Sigmoid colon (tissue), 7 donors: ENCODE measurements at regions of chr10 and their contacts with region 1.

Region 1: DNA sequence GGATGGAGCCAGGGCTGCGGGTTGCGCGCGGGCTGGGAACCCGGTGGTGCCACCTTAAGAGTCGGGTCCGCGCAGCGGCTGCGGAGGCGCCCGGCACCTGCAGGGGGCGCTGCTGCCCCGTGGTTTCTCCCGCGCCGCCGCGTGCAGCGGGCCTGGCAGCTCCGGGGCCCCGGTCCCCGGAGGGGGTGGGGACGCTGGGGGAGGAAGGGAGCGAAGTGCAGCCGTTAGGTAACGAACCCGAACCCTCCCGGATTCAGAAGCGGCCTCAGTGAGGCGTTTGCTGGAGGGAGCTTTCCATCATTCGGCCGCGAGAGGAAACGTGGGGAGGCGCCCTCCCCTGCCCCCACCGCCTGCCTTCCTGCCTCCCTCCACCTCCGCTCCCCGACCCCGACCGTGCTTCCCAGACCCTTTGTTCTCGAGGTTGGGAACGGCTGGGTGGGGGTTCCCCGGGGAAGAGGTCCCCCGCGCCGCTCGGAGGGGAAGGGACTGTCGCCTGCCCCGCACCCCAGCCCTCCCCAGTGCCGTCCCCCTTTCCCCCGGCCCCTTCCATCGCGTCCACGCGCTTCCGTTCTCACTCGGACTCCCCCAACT is 29.6 kb downstream of the SKIDA1 start:
- DNase-seq: peak; percentile 86
- H3K4me3 ChIP-seq: peak overlapping the region; percentile 50 to 83 (median 66)
- H3K27ac ChIP-seq: peak overlapping the region; percentile 73 to 81 (median 74)
- H3K4me1 ChIP-seq: peaks cover 0 to 45% (median 20%) of the 10 kb centered on the region in 4 donors
- H3K27me3 ChIP-seq: no peaks in the 10 kb centered on the region
- CTCF ChIP-seq: peak; percentile 52 to 96 (median 88)
- EP300 ChIP-seq: no peak
- POLR2A ChIP-seq: no peak

Region 2: DNA sequence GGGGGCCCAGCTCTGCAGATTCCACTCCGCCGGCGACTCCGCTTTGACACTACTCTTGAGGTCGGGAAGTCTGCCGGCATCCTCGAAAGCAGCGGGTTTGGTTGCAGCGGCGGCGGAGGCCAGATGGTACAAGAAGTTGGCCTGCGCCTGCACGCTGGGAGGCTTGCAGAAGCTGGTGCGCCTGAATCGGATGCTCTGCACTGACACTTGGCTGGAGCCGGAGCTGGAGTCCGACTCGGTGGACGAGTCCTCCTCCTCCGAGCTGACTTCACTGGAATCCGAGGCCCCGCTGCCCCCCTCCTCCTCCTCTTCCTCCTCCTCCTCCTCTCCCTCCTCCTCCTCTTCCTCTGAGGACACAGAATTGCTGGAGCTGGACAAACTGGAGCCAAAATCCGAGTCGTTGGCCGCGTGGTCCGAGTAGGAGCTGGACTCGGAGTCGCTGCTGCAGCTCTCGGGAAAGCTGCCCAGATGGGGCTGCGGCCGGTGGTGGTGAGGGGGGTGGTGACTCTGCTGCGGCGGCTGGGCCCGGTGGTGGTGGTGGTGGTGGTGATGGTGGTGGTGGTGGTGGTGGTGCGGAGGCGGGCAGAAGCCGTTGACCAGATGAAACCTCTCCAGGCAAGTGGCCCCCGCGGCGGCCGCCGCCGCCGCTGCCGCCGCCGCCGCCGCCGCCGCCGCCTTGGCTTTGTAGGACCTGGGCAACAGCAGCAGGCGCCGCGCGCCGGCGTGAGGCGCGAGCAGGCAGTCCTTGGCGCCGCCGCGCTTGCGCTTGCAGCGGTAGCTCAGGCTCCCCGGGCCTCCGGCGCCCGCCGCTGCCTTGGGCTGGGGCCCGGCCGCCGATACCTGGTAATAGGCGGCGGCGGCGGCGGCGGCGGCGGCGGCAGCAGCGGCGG is 20.6 kb after region 1 on chr10:
- intact Hi-C with region 1: loop called (anchors 2 kb)
- DNase-seq: peak; percentile 83
- H3K4me3 ChIP-seq: peak overlapping the region; percentile 45 to 68 (median 64)
- H3K27ac ChIP-seq: peak overlapping the region; percentile 86 to 99 (median 92)
- H3K4me1 ChIP-seq: peaks cover 0 to 73% (median 35%) of the 10 kb centered on the region in 4 donors
- H3K27me3 ChIP-seq: peaks cover 0 to 6% (median 0%) of the 10 kb centered on the region in 3 donors
- CTCF ChIP-seq: no peak
- EP300 ChIP-seq: no peak
- POLR2A ChIP-seq: no peak

Region 3: DNA sequence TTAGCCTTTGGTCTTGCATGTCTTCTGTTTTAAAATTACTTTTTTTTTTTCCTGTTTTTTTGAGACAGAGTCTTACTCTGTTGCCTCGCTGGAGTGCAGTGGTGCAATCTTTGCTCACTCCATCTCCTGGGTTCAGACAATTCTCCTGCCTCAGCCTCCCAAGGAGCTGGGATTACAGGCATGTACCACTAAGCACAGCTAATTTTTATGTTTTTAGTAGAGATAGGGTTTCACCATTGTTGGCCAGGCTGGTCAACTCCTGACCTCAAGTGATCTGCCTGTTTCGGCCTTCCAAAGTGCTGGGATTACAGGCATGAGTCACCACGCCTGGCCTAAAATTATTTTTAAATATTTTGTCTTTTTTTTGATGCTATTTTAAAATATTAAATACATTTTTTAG is 76.7 kb after region 1 on chr10:
- intact Hi-C with region 1: no loop called
- DNase-seq: peak; percentile 66
- H3K4me3 ChIP-seq: no peak overlapping the region
- H3K27ac ChIP-seq: no peak overlapping the region
- H3K4me1 ChIP-seq: peaks cover 0 to 23% (median 18%) of the 10 kb centered on the region in 4 donors
- H3K27me3 ChIP-seq: no peaks in the 10 kb centered on the region
- CTCF ChIP-seq: no peak
- EP300 ChIP-seq: no peak
- POLR2A ChIP-seq: no peak

Region 4: DNA sequence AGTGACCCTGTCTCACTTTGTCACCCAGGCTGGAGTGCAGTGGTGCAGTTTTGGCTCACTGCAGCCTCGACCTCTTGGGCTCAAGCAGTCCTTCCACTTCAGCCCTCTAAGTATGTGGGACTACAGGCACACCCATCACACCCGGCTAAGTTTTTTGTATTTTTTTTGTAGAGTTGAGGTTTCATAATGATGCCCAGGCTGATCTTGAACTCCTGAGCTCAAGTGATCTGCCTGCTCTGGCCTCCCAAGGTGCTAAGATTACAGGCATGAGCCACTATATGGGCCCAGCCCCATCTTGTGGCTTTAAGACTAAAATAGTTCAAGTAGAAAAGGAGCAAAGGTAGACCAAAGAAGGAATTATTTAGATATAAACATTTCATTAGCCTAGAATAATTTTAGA is 103.7 kb after region 1 on chr10:
- intact Hi-C with region 1: loop called (anchors 10 kb)
- DNase-seq: no peak
- H3K4me3 ChIP-seq: no peak overlapping the region
- H3K27ac ChIP-seq: no peak overlapping the region
- H3K4me1 ChIP-seq: peaks cover 0 to 26% (median 2%) of the 10 kb centered on the region in 4 donors
- H3K27me3 ChIP-seq: no peaks in the 10 kb centered on the region
- CTCF ChIP-seq: no peak
- EP300 ChIP-seq: no peak
- POLR2A ChIP-seq: no peak

Region 5: DNA sequence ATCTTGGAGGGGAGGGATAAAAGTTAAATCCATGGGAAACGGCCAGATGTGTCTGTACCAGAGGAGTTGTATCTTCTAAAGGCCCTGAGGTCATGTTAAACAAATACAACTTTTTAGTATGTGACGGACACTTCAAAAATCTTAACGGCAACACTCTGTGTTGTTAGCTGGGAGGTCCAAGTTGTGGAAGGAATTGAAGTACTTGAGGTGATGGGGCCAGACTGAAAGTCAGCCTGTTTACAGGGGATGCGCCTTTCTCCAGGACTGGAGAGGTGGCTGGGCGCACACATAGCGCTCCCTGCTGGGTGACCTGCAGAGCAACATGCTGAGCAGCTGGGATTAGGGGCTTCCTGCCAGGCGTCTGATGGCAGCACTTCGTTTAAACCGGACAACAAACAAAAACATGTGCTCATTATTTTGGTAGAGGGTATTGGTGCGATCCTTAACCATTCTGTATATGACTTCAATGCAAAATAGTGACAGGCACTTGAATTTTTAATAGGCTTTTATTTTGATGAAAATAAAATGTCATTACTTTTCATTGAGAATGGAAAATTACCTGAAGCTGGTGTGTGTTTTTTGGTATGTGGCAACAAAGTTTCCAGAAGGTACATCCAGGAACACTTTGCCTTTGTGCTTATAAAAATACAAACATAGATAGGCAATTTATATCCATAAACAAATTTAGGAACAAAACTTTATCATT is 236.4 kb after region 1 on chr10:
- intact Hi-C with region 1: loop called (anchors 1 kb)
- DNase-seq: peak; percentile 86
- H3K4me3 ChIP-seq: no peak overlapping the region
- H3K27ac ChIP-seq: no peak overlapping the region
- H3K4me1 ChIP-seq: peaks cover 0 to 7% (median 0%) of the 10 kb centered on the region in 4 donors
- H3K27me3 ChIP-seq: no peaks in the 10 kb centered on the region
- CTCF ChIP-seq: peak; percentile 46 to 80 (median 66)
- EP300 ChIP-seq: no peak
- POLR2A ChIP-seq: no peak

Region 6: GRCh38 chr10:22251751-22252223 is 755.9 kb after region 1 on chr10:
- intact Hi-C with region 1: loop called (anchors 10 kb)
- DNase-seq: peak; percentile 79
- H3K4me3 ChIP-seq: peak overlapping the region; percentile 61 to 86 (median 74)
- H3K27ac ChIP-seq: peak overlapping the region; percentile 94 to 97 (median 96)
- H3K4me1 ChIP-seq: peaks cover 0 to 10% (median 5%) of the 10 kb centered on the region in 4 donors
- H3K27me3 ChIP-seq: no peaks in the 10 kb centered on the region
- CTCF ChIP-seq: no peak
- EP300 ChIP-seq: no peak
- POLR2A ChIP-seq: no peak